PC-3 (cell line): ENCODE measurements at regions of chr18 and their contacts with region 1.

Region 1: DNA sequence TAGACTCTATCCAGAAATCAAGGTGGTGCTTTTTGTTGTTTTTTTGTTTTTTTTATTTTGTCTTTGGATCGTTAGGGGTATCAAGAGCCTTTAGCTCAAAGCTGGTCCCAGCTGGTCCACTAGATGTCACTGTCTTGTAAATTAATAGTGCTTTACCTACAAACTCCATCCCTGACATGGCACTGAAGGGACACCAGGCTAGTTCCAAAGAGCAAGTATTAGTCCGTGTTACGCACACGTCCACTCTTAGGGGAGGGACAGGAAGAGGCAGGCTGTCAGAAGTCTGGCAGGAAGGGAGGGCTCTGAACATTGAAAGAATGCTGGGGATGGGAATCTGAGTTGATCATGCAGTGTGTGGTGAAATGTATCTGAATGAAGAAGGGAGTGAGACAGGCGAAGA is 85.9 kb upstream of the CCBE1 start:
- DNase-seq: peak; percentile 82
- ATAC-seq: peak; percentile 67
- H3K4me3 ChIP-seq: no peak overlapping the region
- H3K27ac ChIP-seq: no peak overlapping the region
- H3K4me1 ChIP-seq: peaks cover 39% of the 10 kb centered on the region
- H3K27me3 ChIP-seq: no peaks in the 10 kb centered on the region
- CTCF ChIP-seq: peak; percentile 80

Region 2: DNA sequence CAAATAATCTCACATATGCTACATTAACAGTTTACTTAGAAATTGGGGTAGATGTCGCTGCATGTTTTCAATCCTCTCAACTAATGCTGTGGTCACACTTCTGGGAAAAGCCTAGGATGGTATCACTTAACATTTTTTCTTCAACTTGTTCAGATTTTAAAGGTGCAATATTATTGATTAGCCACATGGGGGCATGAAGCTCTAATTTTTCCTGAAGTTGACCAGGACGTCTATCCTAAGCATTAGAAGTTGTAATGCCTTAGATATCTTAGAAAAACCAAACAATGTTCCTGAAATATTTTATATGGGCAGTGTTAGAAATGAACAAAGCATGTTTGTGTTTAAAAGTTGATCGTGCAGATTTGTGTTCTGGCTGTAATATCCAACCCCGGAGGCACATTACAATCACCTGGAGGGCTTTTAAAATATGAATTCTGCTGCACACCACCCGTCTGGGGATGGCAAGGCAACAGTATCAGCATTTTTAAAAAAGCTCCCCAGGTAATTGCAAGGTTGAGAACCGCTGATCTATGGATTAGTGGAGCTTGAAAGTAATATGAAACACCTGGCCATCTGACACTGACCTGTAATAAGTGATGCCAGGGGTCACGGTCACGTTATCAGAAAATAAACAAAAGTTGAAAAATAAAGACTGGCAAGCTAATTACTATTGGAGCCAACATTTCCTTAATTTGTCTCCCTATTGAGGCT is 323.6 kb before region 1 on chr18:
- CTCF ChIA-PET with region 1: no interaction called
- POLR2A ChIA-PET with region 1: no interaction called
- intact Hi-C with region 1: loop called (anchors 1 kb)
- DNase-seq: peak; percentile 43
- ATAC-seq: peak; percentile 58
- H3K4me3 ChIP-seq: no peak overlapping the region
- H3K27ac ChIP-seq: no peak overlapping the region
- H3K4me1 ChIP-seq: no peaks in the 10 kb centered on the region
- H3K27me3 ChIP-seq: no peaks in the 10 kb centered on the region
- CTCF ChIP-seq: peak; percentile 77

Region 3: DNA sequence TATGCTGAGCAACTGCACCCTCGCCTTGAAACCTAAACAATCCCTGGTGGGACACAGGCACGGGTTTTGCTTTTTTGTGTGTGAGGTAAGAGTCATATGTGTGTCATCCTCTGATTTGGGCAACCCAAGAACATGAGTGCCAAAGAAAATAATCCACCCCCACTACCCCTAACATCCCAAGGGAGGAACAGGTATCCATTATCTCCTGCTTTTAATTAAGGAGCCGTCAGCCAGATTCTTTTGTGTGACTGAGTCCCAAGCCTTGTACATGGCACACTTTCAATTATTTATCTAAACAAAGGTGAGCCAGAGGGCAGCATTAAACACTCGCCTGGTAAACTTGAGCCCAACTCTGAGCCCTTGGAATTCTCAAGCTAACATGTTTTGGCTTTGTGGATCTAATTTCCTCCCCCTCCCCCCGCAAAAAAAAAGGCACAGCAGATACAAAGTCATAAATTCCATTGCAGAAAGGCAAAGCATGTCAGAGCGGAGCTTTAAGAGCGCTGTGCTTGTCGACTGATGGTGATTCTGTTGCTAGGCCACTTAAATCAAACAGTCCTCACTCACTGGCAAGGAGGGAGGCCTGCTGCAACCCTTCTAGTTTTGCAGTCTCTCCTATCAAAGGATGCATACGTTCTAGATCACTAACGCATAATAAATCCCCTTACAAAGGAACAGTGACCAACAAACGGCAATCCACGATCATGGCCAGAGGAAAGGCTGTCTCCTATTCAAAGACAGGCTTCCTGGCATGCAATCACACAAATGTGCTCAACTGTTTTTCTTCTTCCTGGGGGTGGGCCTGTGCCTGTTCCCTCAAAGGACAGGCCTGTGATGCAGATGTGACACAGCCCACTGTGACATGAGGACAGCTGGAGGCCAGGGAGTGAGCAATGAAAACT is 280.6 kb before region 1 on chr18:
- CTCF ChIA-PET with region 1: no interaction called
- POLR2A ChIA-PET with region 1: no interaction called
- intact Hi-C with region 1: no loop called
- DNase-seq: peak; percentile 73
- ATAC-seq: peak; percentile 80
- H3K4me3 ChIP-seq: no peak overlapping the region
- H3K27ac ChIP-seq: peak overlapping the region; percentile 72
- H3K4me1 ChIP-seq: peaks cover 28% of the 10 kb centered on the region
- H3K27me3 ChIP-seq: no peaks in the 10 kb centered on the region
- CTCF ChIP-seq: no peak

Region 4: GRCh38 chr18:59631583-59632181 is 151.5 kb before region 1 on chr18:
- CTCF ChIA-PET with region 1: interaction called, 4 read pairs
- POLR2A ChIA-PET with region 1: no interaction called
- intact Hi-C with region 1: loop called (anchors 1 kb)
- DNase-seq: peak; percentile 59
- ATAC-seq: peak; percentile 54; the same call in 1 of the 2 replicates
- H3K4me3 ChIP-seq: no peak overlapping the region
- H3K27ac ChIP-seq: no peak overlapping the region
- H3K4me1 ChIP-seq: no peaks in the 10 kb centered on the region
- H3K27me3 ChIP-seq: no peaks in the 10 kb centered on the region
- CTCF ChIP-seq: peak; percentile 97

Region 5: DNA sequence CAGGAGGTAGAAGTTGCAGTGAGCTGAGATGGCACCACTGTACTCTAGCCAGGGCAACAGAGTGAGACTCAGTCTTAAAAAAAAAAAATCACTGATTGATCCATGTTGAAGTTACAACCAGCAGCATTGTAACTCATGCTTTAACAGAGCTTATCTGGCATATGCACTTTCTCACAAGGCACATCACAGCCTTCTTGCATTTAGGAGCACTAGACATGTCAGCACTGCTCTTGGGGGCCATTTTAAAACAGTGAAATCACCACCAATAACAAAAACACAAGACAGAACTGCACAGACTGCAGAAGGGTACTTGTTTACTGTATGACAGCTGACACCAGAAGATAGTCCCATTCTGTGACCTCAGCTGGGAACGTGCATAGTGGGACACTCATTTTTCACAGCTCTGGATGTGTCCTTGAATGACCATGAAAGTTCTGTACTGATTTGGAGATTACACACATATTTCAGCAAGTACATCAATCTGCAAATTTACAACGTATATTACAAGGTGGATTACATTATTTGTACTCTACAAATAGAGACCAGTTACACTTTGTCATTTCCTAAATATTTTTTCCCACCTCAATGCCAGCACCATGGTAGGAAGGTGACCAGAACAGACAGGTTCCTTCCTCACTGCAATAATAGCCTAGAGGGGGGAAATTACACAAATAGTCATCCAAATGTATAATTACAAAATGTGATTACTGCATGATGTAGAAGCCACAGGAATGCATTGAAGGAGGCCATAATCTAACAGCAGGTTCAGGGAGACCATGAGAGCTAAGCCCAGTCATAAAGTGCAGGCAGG is 121.0 kb before region 1 on chr18:
- CTCF ChIA-PET with region 1: no interaction called
- POLR2A ChIA-PET with region 1: interaction called, 17 read pairs
- intact Hi-C with region 1: no loop called
- DNase-seq: peak; percentile 88
- ATAC-seq: peak; percentile 60
- H3K4me3 ChIP-seq: no peak overlapping the region
- H3K27ac ChIP-seq: peak overlapping the region; percentile 80
- H3K4me1 ChIP-seq: peaks cover 49% of the 10 kb centered on the region
- H3K27me3 ChIP-seq: no peaks in the 10 kb centered on the region
- CTCF ChIP-seq: no peak

Region 6: GRCh38 chr18:59697236-59697932 is 85.8 kb before region 1 on chr18 and contains the start of gene CCBE1:
- CTCF ChIA-PET with region 1: interaction called, 9 read pairs
- POLR2A ChIA-PET with region 1: no interaction called
- intact Hi-C with region 1: loop called (anchors 1 kb)
- DNase-seq: peak; percentile 84
- ATAC-seq: peak; percentile 66
- H3K4me3 ChIP-seq: peak within 1 kb of the TSS; percentile 86
- H3K27ac ChIP-seq: peak within 1 kb of the TSS; percentile 35
- H3K4me1 ChIP-seq: peaks cover 43% of the 10 kb centered on the region
- H3K27me3 ChIP-seq: no peaks in the 10 kb centered on the region
- CTCF ChIP-seq: peak; percentile 93
- total RNA-seq, gene CCBE1: 13.9 and 20.8 TPM in 2 replicates

Region 7: DNA sequence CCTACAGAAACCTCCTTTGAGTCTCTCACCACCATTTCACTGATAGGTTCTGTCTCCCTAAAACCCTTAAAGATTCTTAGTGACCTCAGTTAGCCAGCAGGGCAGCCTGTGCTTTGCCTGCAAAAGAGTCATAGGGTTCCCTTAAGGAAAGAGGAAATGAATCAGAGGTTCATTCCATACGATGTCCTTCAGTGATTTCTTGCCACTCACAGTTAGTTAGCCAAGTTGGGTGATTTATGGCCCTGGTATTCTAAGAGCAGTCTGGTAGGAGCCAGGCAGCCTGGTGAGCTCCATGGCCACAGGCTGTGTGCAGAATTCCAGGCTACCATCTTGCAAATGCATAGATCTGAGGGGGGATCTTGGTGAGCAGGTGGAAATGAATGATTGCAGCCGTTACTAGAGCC is 67.2 kb before region 1 on chr18:
- CTCF ChIA-PET with region 1: interaction called, 5 read pairs
- POLR2A ChIA-PET with region 1: no interaction called
- intact Hi-C with region 1: loop called (anchors 5 kb)
- DNase-seq: peak; percentile 95
- ATAC-seq: peak; percentile 78
- H3K4me3 ChIP-seq: no peak overlapping the region
- H3K27ac ChIP-seq: peak overlapping the region; percentile 23
- H3K4me1 ChIP-seq: peaks cover 56% of the 10 kb centered on the region
- H3K27me3 ChIP-seq: no peaks in the 10 kb centered on the region
- CTCF ChIP-seq: no peak

Region 8: DNA sequence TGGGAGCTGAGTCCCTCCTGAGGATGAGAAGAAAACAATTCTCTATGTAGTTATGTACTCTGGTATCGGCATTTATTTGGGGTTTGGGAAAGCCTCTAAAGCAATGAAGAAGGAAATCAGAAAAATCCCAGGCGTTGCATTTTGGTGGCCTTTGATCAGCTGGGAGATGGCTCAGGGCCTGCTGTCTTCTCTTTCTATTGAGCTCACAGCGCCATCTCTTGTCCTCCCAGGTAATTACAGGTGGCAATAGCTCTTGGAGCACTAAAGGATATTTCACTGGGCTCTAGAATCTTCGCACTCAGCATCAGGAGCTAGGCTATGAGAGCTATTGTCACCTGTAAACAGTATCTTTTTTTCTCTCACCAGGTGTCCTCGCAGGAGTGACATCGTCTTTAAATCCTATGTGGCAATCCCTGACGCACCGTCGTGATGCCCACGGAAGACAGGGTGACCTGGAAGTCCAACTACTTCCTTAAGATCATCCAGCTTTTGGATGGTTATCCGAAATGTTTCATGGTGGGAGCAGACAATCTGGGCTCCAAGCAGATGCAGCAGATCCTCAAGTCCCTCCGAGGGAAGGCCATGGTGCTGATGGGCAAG is 40.6 kb after region 1 on chr18:
- CTCF ChIA-PET with region 1: interaction called, 23 read pairs
- POLR2A ChIA-PET with region 1: no interaction called
- intact Hi-C with region 1: loop called (anchors 1 kb)
- DNase-seq: peak; percentile 92
- ATAC-seq: peak; percentile 92
- H3K4me3 ChIP-seq: no peak overlapping the region
- H3K27ac ChIP-seq: no peak overlapping the region
- H3K4me1 ChIP-seq: peaks cover 4% of the 10 kb centered on the region
- H3K27me3 ChIP-seq: no peaks in the 10 kb centered on the region
- CTCF ChIP-seq: peak; percentile 92